Activated CD4-positive, alpha-beta T cell treated with anti-CD3 and anti-CD28 coated beads, Interleukin-2, amount 10 ng/mL, durations not matched to agents 24 days and 14 days (primary cell): ENCODE measurements at regions of chr6 and their contacts with region 1.

Region 1: GRCh38 chr6:159098636-159099106 is 53.9 kb upstream of the TAGAP start:
- DNase-seq: peak; percentile 90
- H3K4me3 Mint-ChIP-seq: peak overlapping the region; percentile 77
- H3K27ac Mint-ChIP-seq: peak overlapping the region; percentile 99
- H3K4me1 Mint-ChIP-seq: peaks cover 76% of the 10 kb centered on the region
- H3K27me3 Mint-ChIP-seq: no peaks in the 10 kb centered on the region

Region 2: DNA sequence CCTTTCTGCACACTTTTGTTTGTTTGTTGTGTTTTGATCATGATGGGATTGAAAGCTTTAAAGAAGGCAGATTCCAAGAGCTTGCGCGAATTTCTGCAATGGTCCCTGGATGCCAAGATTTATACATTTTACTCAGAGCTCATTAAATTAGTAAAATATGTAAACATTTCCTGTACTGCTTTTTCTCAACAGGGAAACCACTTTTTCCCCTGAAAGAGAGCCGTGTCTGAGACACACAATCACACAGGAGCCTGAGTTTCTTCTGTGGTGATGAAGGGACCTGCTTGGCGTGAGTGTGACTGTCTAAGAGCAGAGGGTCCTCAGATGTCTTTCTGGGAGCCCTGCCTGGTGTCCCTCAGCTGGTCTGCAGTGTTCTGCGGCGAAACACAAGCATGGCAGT is 41.8 kb before region 1 on chr6:
- intact Hi-C with region 1: loop called (anchors 1 kb)
- DNase-seq: peak; percentile 61
- H3K4me3 Mint-ChIP-seq: peak overlapping the region; percentile 70
- H3K27ac Mint-ChIP-seq: peak overlapping the region; percentile 94
- H3K4me1 Mint-ChIP-seq: peaks cover 68% of the 10 kb centered on the region
- H3K27me3 Mint-ChIP-seq: peaks cover 1% of the 10 kb centered on the region

Region 3: DNA sequence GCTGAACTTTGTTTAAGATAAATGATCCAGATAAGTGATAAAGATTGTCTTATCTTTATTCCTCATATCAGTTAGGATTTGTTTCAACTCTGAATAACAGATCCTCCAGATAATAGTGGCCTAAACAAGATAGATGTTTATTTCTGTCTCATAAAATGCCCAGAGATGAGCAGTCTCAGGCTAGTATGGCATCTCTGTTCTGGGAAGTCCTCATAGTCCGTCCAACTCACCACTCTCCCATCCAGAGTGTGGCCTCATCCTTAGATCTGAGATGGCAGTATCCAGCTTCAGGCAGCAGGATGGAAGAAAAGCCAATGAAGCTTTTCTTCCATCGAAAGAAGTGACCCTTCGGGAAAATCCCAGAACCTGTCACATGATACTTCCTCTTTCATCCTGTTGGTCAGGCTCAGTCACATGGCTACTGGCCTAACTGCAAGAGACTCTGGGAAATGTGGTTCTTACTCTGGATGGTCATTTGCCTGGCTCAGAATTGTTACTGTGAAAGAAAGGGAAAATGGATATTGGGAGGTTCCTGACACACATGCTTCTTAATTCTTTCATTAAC is 24.5 kb before region 1 on chr6:
- intact Hi-C with region 1: no loop called
- DNase-seq: no peak
- H3K4me3 Mint-ChIP-seq: no peak overlapping the region
- H3K27ac Mint-ChIP-seq: no peak overlapping the region
- H3K4me1 Mint-ChIP-seq: peaks cover 30% of the 10 kb centered on the region
- H3K27me3 Mint-ChIP-seq: peaks cover 3% of the 10 kb centered on the region